ENCODE measurements at regions of chr2 and their contacts with region 1.

Region 1: GRCh38 chr2:16608661-16609643 is 56.7 kb downstream of the CYRIA start:
- DNase-seq: peak; percentile 81 to 95 (median 86)
- H3K4me3 ChIP-seq: peak overlapping the region in 2 of 4 donors; percentile 15 to 59
- H3K27ac ChIP-seq: peak overlapping the region in 2 of 5 donors; percentile 56 to 62
- H3K4me1 ChIP-seq: peaks cover 3 to 21% of the 10 kb centered on the region in 2 donors
- H3K27me3 ChIP-seq: no peaks in the 10 kb centered on the region
- CTCF ChIP-seq: peak; percentile 79 to 95 (median 92)
- POLR2A ChIP-seq: no peak

Region 2: DNA sequence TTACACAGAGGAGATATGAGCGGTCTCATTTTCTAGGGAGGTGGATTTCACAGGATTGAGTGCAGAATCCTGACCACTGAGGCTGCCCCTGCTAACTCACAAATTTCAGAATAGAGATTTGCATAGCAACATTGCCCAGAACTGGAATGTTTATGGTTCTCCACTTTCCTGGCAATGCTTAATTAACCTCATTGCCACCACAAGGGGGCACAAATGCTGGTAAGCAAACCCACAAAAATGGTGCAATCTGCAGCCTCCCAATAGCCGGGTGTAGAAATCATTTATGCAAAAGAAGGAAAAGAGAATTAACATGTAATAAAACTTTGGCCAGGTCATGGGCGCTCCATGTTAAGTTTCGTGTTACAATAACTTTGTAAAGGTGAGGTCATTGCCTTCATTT is 55.7 kb before region 1 on chr2:
- intact Hi-C with region 1: loop called (anchors 5 to 10 kb)
- DNase-seq: peak; percentile 33 to 74 (median 45)
- H3K4me3 ChIP-seq: no peak overlapping the region
- H3K27ac ChIP-seq: no peak overlapping the region
- H3K4me1 ChIP-seq: no peaks in the 10 kb centered on the region
- H3K27me3 ChIP-seq: no peaks in the 10 kb centered on the region
- CTCF ChIP-seq: peak; percentile 49 to 69 (median 64)
- POLR2A ChIP-seq: no peak

Region 3: GRCh38 chr2:16559278-16560067 is 49.5 kb before region 1 on chr2:
- intact Hi-C with region 1: loop called (anchors 5 to 10 kb)
- DNase-seq: peak in 1 of 7 donors; percentile 7
- H3K4me3 ChIP-seq: no peak overlapping the region
- H3K27ac ChIP-seq: peak overlapping the region in 2 of 5 donors; percentile 8 to 22
- H3K4me1 ChIP-seq: no peaks in the 10 kb centered on the region
- H3K27me3 ChIP-seq: no peaks in the 10 kb centered on the region
- CTCF ChIP-seq: no peak
- POLR2A ChIP-seq: no peak

Region 4: DNA sequence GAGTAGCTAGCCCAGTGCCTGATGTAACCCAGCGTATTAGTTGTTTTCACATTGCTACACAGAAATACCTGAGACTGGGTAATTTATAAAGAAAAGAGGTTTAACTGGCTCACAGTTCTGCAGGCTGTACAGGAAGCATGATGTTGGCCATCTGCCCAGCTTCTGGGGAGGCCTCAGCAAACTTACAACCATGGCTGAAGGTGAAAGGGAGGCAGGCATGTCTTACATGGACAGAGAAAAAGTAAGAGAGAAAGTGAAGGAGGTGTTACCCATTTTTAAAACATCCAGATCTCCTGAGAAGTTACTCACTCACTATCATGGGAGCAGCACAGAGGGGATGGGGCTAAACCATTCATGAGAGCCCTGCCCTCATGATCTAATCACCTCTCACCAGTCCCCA is 62.8 kb after region 1 on chr2:
- intact Hi-C with region 1: no loop called
- DNase-seq: peak in 3 of 7 donors; percentile 32 to 37 (median 33)
- H3K4me3 ChIP-seq: no peak overlapping the region
- H3K27ac ChIP-seq: no peak overlapping the region
- H3K4me1 ChIP-seq: no peaks in the 10 kb centered on the region
- H3K27me3 ChIP-seq: no peaks in the 10 kb centered on the region
- CTCF ChIP-seq: no peak
- POLR2A ChIP-seq: no peak